Activated CD4-positive, alpha-beta T cell treated with anti-CD3 and anti-CD28 coated beads, Interleukin-2, amount 10 ng/mL, durations not matched to agents 24 days and 14 days (primary cell): ENCODE measurements at regions of chr6 and their contacts with region 1.

Region 1: DNA sequence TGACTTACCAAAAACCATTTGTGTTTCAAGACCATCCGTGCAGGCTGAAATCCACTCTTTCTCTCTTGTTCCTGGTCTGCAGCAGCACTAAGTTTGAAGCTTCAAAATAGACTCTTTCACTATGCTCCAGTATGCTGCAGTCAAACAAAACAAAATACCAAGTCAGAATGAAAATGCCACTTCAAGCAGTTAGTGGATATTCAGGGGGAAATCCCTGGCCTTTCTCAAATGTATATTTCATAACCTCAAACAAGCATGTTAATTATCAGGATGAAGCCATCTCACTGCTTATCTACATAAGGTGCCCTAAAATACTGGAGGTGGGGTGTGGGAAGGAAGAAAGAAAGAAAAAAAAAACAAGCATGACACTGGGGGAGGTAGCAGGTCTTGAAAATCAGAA is 103.5 kb downstream of the ATXN1 start:
- DNase-seq: peak; percentile 75
- H3K4me3 Mint-ChIP-seq: peak overlapping the region; percentile 50
- H3K27ac Mint-ChIP-seq: peak overlapping the region; percentile 83
- H3K4me1 Mint-ChIP-seq: peaks cover 67% of the 10 kb centered on the region
- H3K27me3 Mint-ChIP-seq: no peaks in the 10 kb centered on the region

Region 2: GRCh38 chr6:16420715-16421461 is 236.9 kb before region 1 on chr6:
- intact Hi-C with region 1: loop called (anchors 2 kb)
- DNase-seq: peak; percentile 87
- H3K4me3 Mint-ChIP-seq: peak overlapping the region; percentile 79
- H3K27ac Mint-ChIP-seq: peak overlapping the region; percentile 90
- H3K4me1 Mint-ChIP-seq: peaks cover 50% of the 10 kb centered on the region
- H3K27me3 Mint-ChIP-seq: no peaks in the 10 kb centered on the region

Region 3: DNA sequence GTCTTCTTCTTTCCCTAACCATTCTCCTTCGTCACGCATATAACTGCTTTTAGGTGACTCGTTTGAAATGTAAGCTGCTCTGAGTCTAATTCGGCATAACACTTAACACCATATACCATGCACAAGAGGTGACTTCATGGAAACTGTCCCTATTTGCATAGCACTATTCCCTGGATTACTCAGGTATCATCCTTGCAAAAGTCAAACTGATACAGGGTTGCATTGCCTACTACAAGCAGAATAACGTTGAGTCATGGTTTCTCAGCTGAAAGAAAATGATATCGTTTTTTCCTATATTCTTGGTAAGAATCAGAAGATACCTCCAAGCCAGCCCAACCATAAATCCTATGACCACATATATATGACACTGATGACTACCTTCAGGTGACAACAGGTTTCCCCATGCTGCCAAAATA is 124.0 kb before region 1 on chr6:
- intact Hi-C with region 1: loop called (anchors 2 kb)
- DNase-seq: no peak
- H3K4me3 Mint-ChIP-seq: no peak overlapping the region
- H3K27ac Mint-ChIP-seq: peak overlapping the region; percentile 46
- H3K4me1 Mint-ChIP-seq: peaks cover 19% of the 10 kb centered on the region
- H3K27me3 Mint-ChIP-seq: no peaks in the 10 kb centered on the region

Region 4: GRCh38 chr6:16670183-16670582 is 12.4 kb after region 1 on chr6:
- intact Hi-C with region 1: loop called (anchors 1 kb)
- DNase-seq: no peak
- H3K4me3 Mint-ChIP-seq: peak overlapping the region; percentile 70
- H3K27ac Mint-ChIP-seq: peak overlapping the region; percentile 97
- H3K4me1 Mint-ChIP-seq: peaks cover 64% of the 10 kb centered on the region
- H3K27me3 Mint-ChIP-seq: no peaks in the 10 kb centered on the region

Region 5: GRCh38 chr6:16731478-16732051 is 73.8 kb after region 1 on chr6:
- intact Hi-C with region 1: loop called (anchors 1 kb)
- DNase-seq: peak; percentile 80
- H3K4me3 Mint-ChIP-seq: peak overlapping the region; percentile 69
- H3K27ac Mint-ChIP-seq: peak overlapping the region; percentile 76
- H3K4me1 Mint-ChIP-seq: peaks cover 62% of the 10 kb centered on the region
- H3K27me3 Mint-ChIP-seq: no peaks in the 10 kb centered on the region